ENCODE measurements at regions of chr11 and their contacts with region 1.

Region 1: GRCh38 chr11:13210424-13210823 is 67.2 kb upstream of the BMAL1 start:
- DNase-seq: peak in 4 of 5 donors; percentile 13 to 20 (median 14)
- H3K4me3 ChIP-seq: no peak overlapping the region
- H3K4me3 Mint-ChIP-seq: no peak overlapping the region
- H3K27ac ChIP-seq: no peak overlapping the region
- H3K27ac Mint-ChIP-seq: peak overlapping the region in 2 of 7 donors; percentile 37 to 42
- H3K4me1 ChIP-seq: peaks cover 24% of the 10 kb centered on the region
- H3K4me1 Mint-ChIP-seq: peaks cover 17 to 34% (median 25%) of the 10 kb centered on the region in 4 donors
- H3K27me3 ChIP-seq: no peaks in the 10 kb centered on the region
- H3K27me3 Mint-ChIP-seq: no peaks in the 10 kb centered on the region

Region 2: GRCh38 chr11:13183094-13183825 is 27.2 kb before region 1 on chr11:
- CTCF ChIA-PET with region 1: interaction called, 10 read pairs
- POLR2A ChIA-PET with region 1: no interaction called
- intact Hi-C with region 1: loop called (anchors 1 kb)
- DNase-seq: peak in 4 of 5 donors; percentile 12 to 32 (median 24)
- H3K4me3 ChIP-seq: no peak overlapping the region
- H3K4me3 Mint-ChIP-seq: peak overlapping the region in 7 of 8 donors; percentile 44 to 65 (median 60)
- H3K27ac ChIP-seq: no peak overlapping the region
- H3K27ac Mint-ChIP-seq: no peak overlapping the region
- H3K4me1 ChIP-seq: peaks cover 7% of the 10 kb centered on the region
- H3K4me1 Mint-ChIP-seq: peaks cover 3 to 6% (median 6%) of the 10 kb centered on the region in 4 donors
- H3K27me3 ChIP-seq: no peaks in the 10 kb centered on the region
- H3K27me3 Mint-ChIP-seq: peaks cover 8 to 12% of the 10 kb centered on the region in 2 donors

Region 3: GRCh38 chr11:13238879-13239514 is 28.6 kb after region 1 on chr11:
- CTCF ChIA-PET with region 1: interaction called, 6 read pairs
- POLR2A ChIA-PET with region 1: no interaction called
- intact Hi-C with region 1: loop called (anchors 1 kb)
- DNase-seq: peak; percentile 45 to 61 (median 54)
- H3K4me3 ChIP-seq: no peak overlapping the region
- H3K4me3 Mint-ChIP-seq: no peak overlapping the region
- H3K27ac ChIP-seq: no peak overlapping the region
- H3K27ac Mint-ChIP-seq: peak overlapping the region in 1 of 7 donors; percentile 63
- H3K4me1 ChIP-seq: no peaks in the 10 kb centered on the region
- H3K4me1 Mint-ChIP-seq: peaks cover 0 to 3% (median 1%) of the 10 kb centered on the region in 4 donors
- H3K27me3 ChIP-seq: peaks cover 8% of the 10 kb centered on the region
- H3K27me3 Mint-ChIP-seq: peaks cover 7 to 15% of the 10 kb centered on the region in 2 donors

Region 4: DNA sequence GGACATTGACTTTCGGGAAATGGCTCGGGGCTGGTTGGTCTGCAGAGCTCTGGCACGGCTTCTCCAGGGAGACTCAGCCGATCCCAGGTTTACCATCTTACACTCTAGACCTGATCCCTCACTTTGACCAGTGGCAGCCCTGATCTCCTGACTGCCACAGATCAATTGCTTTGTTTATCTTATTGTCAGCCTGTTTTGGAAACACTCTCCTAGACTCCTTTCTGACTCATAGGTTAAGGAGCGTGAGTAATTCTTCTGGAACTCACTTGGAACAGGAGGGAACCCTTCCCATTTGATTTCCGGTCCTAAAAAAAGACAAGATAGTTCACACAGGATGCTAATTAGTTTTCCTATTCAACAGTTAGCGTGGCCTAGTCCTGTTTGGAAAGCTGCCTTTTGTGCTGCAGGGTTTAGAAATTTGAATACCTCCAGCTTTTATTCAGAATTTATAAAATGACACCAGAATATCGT is 51.2 kb after region 1 on chr11:
- CTCF ChIA-PET with region 1: no interaction called
- POLR2A ChIA-PET with region 1: no interaction called
- intact Hi-C with region 1: loop called (anchors 5 kb)
- DNase-seq: no peak
- H3K4me3 ChIP-seq: no peak overlapping the region
- H3K4me3 Mint-ChIP-seq: no peak overlapping the region
- H3K27ac ChIP-seq: no peak overlapping the region
- H3K27ac Mint-ChIP-seq: peak overlapping the region in 1 of 7 donors; percentile 51
- H3K4me1 ChIP-seq: peaks cover 10% of the 10 kb centered on the region
- H3K4me1 Mint-ChIP-seq: peaks cover 18 to 24% (median 20%) of the 10 kb centered on the region in 4 donors
- H3K27me3 ChIP-seq: no peaks in the 10 kb centered on the region
- H3K27me3 Mint-ChIP-seq: no peaks in the 10 kb centered on the region

Region 5: DNA sequence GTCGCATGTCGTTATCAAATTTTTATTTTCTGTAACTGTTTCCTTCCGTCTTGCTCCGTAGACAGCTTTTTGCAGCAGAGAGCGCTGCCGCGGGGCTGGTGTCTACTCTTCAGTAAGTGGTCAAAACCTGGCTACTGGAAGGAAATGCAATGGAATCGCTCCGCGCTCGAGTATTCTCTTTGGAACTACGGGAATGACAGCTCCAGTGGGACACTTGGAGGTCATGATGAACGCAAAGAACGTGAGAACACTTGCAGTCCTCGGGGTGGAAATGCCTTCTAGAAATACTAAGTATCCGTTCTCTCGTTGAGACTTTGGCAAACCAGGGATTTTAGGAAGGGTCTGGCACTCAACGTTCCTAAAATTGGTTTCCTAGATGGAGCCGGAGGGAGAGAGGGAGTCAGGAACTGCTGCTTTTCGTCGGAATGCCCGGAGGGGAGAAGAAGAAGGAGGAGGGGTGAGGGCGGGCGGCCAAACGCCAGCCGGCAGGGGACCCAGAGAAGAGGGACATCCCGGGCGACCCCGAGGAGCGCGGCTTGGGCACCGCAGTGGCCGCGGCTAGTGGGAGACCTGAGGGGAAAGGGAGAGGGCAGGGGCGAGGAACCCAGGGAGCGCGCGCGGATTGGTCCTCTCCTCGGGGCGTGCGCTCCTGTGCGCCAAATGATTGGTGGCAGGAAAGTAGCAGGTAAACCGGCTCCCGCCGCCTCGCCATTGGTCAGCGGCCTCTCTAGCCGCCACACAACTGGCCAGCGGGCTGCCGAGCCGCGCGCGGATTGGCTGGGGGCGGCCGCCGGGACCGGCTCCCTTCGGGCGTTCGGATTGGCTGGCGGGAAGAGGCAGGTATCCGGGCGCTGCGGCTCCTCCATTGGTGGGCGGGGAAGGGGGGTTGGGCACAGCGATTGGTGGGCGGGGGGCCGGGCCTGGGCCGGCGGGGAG is 66.7 kb after region 1 on chr11:
- CTCF ChIA-PET with region 1: interaction called, 3 read pairs
- POLR2A ChIA-PET with region 1: interaction called, 3 read pairs
- intact Hi-C with region 1: loop called (anchors 2 kb)
- DNase-seq: peak; percentile 97 to 98 (median 98)
- H3K4me3 ChIP-seq: peak overlapping the region; percentile 83 to 95
- H3K4me3 Mint-ChIP-seq: peak overlapping the region; percentile 93 to 100 (median 98)
- H3K27ac ChIP-seq: peak overlapping the region; percentile 80
- H3K27ac Mint-ChIP-seq: peak overlapping the region; percentile 94 to 99 (median 96)
- H3K4me1 ChIP-seq: peaks cover 42% of the 10 kb centered on the region
- H3K4me1 Mint-ChIP-seq: peaks cover 33 to 52% (median 42%) of the 10 kb centered on the region in 4 donors
- H3K27me3 ChIP-seq: peaks cover 5% of the 10 kb centered on the region
- H3K27me3 Mint-ChIP-seq: peaks cover 0 to 2% of the 10 kb centered on the region in 2 donors

Region 6: DNA sequence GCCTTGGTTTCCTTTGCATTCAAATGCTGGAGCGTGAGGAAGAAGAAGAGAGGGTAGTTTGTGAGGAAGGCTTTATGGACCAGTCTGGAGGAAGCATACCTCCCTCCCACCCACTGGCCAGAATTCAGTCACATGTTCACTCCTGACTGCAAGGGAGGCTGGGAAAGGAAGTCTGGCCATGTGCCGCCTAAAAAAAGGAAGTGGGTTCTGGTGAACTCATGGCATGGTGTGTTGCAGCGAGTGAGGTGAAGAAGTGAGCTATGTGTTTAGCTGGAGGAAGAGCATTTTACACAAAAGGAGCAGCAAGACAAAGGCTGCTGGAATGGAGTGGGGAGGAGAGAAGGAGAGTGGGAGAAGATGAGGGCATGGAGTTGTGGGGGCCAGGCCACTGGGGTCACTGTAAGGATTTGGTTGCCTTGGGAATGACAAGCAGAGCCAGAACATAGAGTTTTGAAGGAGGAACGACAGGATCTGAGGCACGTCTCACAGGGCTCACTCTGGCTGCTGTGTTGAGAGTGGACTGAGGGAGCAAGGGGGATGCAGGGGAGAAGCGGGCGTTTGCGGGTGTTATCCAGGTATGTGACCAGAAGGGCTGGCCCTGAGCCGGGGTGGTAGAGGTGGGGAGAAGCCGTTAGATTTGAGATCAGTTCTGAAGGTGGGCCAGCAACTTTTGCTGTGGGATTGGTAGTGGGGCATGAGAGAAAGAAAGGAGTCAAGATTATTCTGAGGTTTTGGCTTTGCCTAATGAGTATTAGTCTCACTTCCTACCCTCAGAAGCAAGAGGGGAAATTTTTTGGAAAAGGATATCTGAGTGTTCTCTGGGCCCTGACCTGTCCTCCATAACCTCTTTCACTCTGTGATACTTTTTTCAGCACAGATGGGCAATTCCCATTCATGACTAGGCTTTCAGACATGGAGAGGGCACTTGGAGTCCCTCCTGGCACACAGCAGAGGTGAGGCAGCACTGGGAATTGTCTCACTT is 93.5 kb after region 1 on chr11:
- CTCF ChIA-PET with region 1: no interaction called
- POLR2A ChIA-PET with region 1: no interaction called
- intact Hi-C with region 1: no loop called
- DNase-seq: no peak
- H3K4me3 ChIP-seq: no peak overlapping the region
- H3K4me3 Mint-ChIP-seq: peak overlapping the region in 7 of 8 donors; percentile 6 to 85 (median 36)
- H3K27ac ChIP-seq: no peak overlapping the region
- H3K27ac Mint-ChIP-seq: peak overlapping the region in 6 of 7 donors; percentile 2 to 86 (median 52)
- H3K4me1 ChIP-seq: peaks cover 97% of the 10 kb centered on the region
- H3K4me1 Mint-ChIP-seq: peaks cover 0 to 51% (median 25%) of the 10 kb centered on the region in 4 donors
- H3K27me3 ChIP-seq: no peaks in the 10 kb centered on the region
- H3K27me3 Mint-ChIP-seq: no peaks in the 10 kb centered on the region